Ovary (tissue), 10 donors: ENCODE measurements at regions of chr4 and their contacts with region 1.

Region 1: GRCh38 chr4:143017210-143017609 is 167.5 kb upstream of the USP38 start:
- DNase-seq: no peak
- H3K4me3 ChIP-seq: no peak overlapping the region
- H3K27ac ChIP-seq: no peak overlapping the region
- H3K4me1 ChIP-seq: no peaks in the 10 kb centered on the region
- H3K27me3 ChIP-seq: no peaks in the 10 kb centered on the region
- CTCF ChIP-seq: no peak
- EP300 ChIP-seq: no peak
- POLR2A ChIP-seq: no peak

Region 2: GRCh38 chr4:143035661-143036060 is 18.5 kb after region 1 on chr4:
- intact Hi-C with region 1: loop called in 1 of 4 experiments (anchors 2 kb)
- DNase-seq: no peak
- H3K4me3 ChIP-seq: no peak overlapping the region
- H3K27ac ChIP-seq: no peak overlapping the region
- H3K4me1 ChIP-seq: no peaks in the 10 kb centered on the region
- H3K27me3 ChIP-seq: no peaks in the 10 kb centered on the region
- CTCF ChIP-seq: no peak
- EP300 ChIP-seq: no peak
- POLR2A ChIP-seq: no peak